Activated CD8-positive, alpha-beta memory T cell treated with anti-CD3 and anti-CD28 coated beads, Interleukin-2, amount 10 ng/mL, durations not matched to agents 7 days and 5 days (primary cell): ENCODE measurements at regions of chr15 and their contacts with region 1.

Region 1: GRCh38 chr15:72599855-72600464 is 54.5 kb upstream of the GOLGA6B start:
- DNase-seq: peak; percentile 45
- ATAC-seq: no peak
- H3K4me3 Mint-ChIP-seq: no peak overlapping the region
- H3K27ac Mint-ChIP-seq: no peak overlapping the region
- H3K4me1 Mint-ChIP-seq: no peaks in the 10 kb centered on the region
- H3K27me3 Mint-ChIP-seq: no peaks in the 10 kb centered on the region

Region 2: GRCh38 chr15:72585476-72586082 is 14.4 kb before region 1 on chr15:
- CTCF ChIA-PET with region 1: interaction called, 13 read pairs
- DNase-seq: no peak
- ATAC-seq: no peak
- H3K4me3 Mint-ChIP-seq: no peak overlapping the region
- H3K27ac Mint-ChIP-seq: no peak overlapping the region
- H3K4me1 Mint-ChIP-seq: peaks cover 2% of the 10 kb centered on the region
- H3K27me3 Mint-ChIP-seq: no peaks in the 10 kb centered on the region

Region 3: DNA sequence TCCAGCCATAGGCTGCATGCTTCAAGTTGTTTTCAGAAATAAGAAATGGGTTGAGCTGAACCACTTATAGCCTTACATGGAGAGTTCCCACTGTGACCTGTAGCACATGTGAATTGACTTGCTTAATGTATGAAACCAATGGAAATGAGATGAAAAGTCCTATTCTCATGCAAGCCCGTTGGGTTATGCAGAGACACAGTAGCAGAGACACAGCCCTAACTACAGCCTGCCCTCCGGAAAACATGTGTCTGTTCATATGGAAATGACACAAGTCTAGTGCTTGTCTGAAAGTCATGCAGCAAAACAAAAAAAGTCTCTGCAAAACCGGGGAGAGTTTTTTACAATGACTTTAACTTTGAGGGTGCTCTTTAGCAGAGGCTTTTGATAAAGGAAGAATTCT is 71.6 kb after region 1 on chr15:
- CTCF ChIA-PET with region 1: interaction called, 13 read pairs
- DNase-seq: no peak
- ATAC-seq: no peak
- H3K4me3 Mint-ChIP-seq: no peak overlapping the region
- H3K27ac Mint-ChIP-seq: no peak overlapping the region
- H3K4me1 Mint-ChIP-seq: peaks cover 4% of the 10 kb centered on the region
- H3K27me3 Mint-ChIP-seq: peaks cover 20% of the 10 kb centered on the region

Region 4: GRCh38 chr15:72685925-72686794 is 86.2 kb after region 1 on chr15 and contains the starts of genes BBS4 and HIGD2B:
- CTCF ChIA-PET with region 1: interaction called, 12 read pairs
- DNase-seq: peak; percentile 95
- ATAC-seq: peak; percentile 97
- H3K4me3 Mint-ChIP-seq: peak within 1 kb of the TSS; percentile 91
- H3K27ac Mint-ChIP-seq: peak within 1 kb of the TSS; percentile 95
- H3K4me1 Mint-ChIP-seq: peaks cover 16% of the 10 kb centered on the region
- H3K27me3 Mint-ChIP-seq: peaks cover under 1% of the 10 kb centered on the region
- total RNA-seq, gene BBS4: 13.1 to 14.7 TPM
- total RNA-seq, gene HIGD2B: 0.53 TPM in 1 of 2 experiments, not detected in the other